Left ventricle myocardium superior (tissue), 1 donor: ENCODE measurements at regions of chr7 and their contacts with region 1.

Region 1: GRCh38 chr7:116367221-116367813 is 132.2 kb upstream of the CAV2 start:
- DNase-seq: no peak
- ATAC-seq: no peak

Region 2: DNA sequence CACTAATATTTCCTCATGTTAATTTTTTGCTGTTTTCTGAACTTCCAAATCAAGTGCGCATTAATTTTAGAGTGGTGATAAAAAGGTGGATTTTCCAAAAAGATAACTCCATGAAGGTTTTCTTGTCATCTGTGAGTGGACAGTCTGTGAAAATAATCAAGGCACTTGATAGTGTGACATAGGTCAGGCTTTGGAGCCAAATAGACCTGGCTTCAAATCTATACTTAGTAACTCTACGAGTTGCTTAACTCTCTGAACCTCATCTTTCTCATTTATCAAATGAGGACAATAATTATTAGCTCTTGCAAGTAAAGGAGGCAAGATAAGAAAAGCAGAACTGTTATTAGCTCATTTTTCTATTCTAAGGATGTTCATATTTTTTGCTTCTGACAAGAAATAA is 280.0 kb after region 1 on chr7:
- intact Hi-C with region 1: loop called (anchors 5 kb)
- DNase-seq: no peak
- ATAC-seq: peak; percentile 79